Tibial artery (tissue), 4 donors: ENCODE measurements at regions of chr4 and their contacts with region 1.

Region 1: GRCh38 chr4:13261486-13262257 is 222.5 kb downstream of the RAB28 start:
- DNase-seq: no peak
- H3K4me3 ChIP-seq: no peak overlapping the region
- H3K27ac ChIP-seq: no peak overlapping the region
- H3K4me1 ChIP-seq: no peaks in the 10 kb centered on the region
- H3K27me3 ChIP-seq: no peaks in the 10 kb centered on the region
- CTCF ChIP-seq: no peak

Region 2: GRCh38 chr4:13498469-13498868 is 236.8 kb after region 1 on chr4:
- intact Hi-C with region 1: no loop called
- DNase-seq: no peak
- H3K4me3 ChIP-seq: no peak overlapping the region
- H3K27ac ChIP-seq: no peak overlapping the region
- H3K4me1 ChIP-seq: no peaks in the 10 kb centered on the region
- H3K27me3 ChIP-seq: peaks cover 0 to 5% of the 10 kb centered on the region in 2 donors
- CTCF ChIP-seq: no peak

Region 3: DNA sequence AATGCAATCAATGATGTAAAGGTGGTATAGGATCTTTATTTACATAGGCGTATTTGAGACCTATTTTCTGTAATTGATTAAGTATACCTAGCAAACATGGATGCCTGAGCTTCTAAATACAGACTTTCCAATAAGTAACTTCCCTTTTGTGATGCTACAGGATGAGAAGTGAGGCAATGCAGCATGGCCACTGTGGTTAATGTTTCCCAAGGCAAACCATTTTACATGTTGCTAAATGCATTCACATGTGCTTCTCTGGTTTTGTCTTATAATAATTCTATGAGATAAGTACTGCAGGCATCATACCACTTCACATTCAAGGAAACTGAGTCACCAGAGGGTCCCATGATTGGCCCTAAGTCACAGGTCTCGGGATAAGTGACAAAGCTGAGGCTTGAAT is 318.4 kb after region 1 on chr4:
- intact Hi-C with region 1: no loop called
- DNase-seq: no peak
- H3K4me3 ChIP-seq: no peak overlapping the region
- H3K27ac ChIP-seq: no peak overlapping the region
- H3K4me1 ChIP-seq: no peaks in the 10 kb centered on the region
- H3K27me3 ChIP-seq: no peaks in the 10 kb centered on the region
- CTCF ChIP-seq: no peak

Region 4: GRCh38 chr4:14321723-14322122 is 1060.1 kb after region 1 on chr4:
- intact Hi-C with region 1: loop called (anchors 5 kb)
- DNase-seq: no peak
- H3K4me3 ChIP-seq: no peak overlapping the region
- H3K27ac ChIP-seq: no peak overlapping the region
- H3K4me1 ChIP-seq: no peaks in the 10 kb centered on the region
- H3K27me3 ChIP-seq: no peaks in the 10 kb centered on the region
- CTCF ChIP-seq: no peak